ENCODE measurements at regions of chr3 and their contacts with region 1.

Region 1: GRCh38 chr3:45593708-45594609 is 592 bp upstream of the LIMD1 start:
- DNase-seq: peak; percentile 77 to 87
- ATAC-seq: peak; percentile 64 to 74 (median 70)
- H3K4me3 ChIP-seq: peak overlapping the region; percentile 92
- H3K27ac ChIP-seq: peak overlapping the region; percentile 98
- H3K4me1 ChIP-seq: peaks cover 41% of the 10 kb centered on the region
- H3K27me3 ChIP-seq: no peaks in the 10 kb centered on the region
- CTCF ChIP-seq: no peak

Region 2: GRCh38 chr3:45507820-45508317 is 86.1 kb before region 1 on chr3:
- intact Hi-C with region 1: loop called (anchors 2 to 5 kb)
- DNase-seq: peak; percentile 35 to 73
- ATAC-seq: peak in 3 of 4 donors; percentile 43 to 54 (median 46)
- H3K4me3 ChIP-seq: no peak overlapping the region
- H3K27ac ChIP-seq: no peak overlapping the region
- H3K4me1 ChIP-seq: no peaks in the 10 kb centered on the region
- H3K27me3 ChIP-seq: no peaks in the 10 kb centered on the region
- CTCF ChIP-seq: no peak

Region 3: DNA sequence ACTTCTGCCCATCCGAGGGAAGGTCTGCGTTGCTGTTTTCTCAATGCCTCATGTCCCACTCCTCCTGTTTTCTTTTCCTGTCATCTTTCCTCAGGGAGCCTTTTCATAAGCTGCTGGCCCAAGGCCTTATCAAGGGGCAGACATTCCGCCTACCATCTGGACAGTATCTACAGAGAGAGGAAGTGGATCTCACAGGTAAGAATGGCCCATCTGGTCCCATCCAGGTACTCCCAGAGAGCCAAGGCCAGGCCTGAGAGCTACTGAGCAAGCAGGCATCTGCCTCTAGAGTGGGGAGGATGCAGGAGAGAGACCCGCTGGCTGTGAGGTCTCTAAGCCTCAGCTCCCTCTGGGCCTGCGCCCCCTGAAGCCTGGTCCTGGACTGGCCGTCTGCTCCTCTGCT is 80.9 kb before region 1 on chr3:
- intact Hi-C with region 1: loop called (anchors 2 to 5 kb)
- DNase-seq: no peak
- ATAC-seq: no peak
- H3K4me3 ChIP-seq: no peak overlapping the region
- H3K27ac ChIP-seq: no peak overlapping the region
- H3K4me1 ChIP-seq: peaks cover 13% of the 10 kb centered on the region
- H3K27me3 ChIP-seq: no peaks in the 10 kb centered on the region
- CTCF ChIP-seq: no peak

Region 4: GRCh38 chr3:45546716-45547701 is 47.0 kb before region 1 on chr3:
- intact Hi-C with region 1: loop called in 1 of 2 experiments (anchors 5 kb)
- DNase-seq: peak in 1 of 2 donors; percentile 45
- ATAC-seq: peak in 1 of 4 donors; percentile 25
- H3K4me3 ChIP-seq: no peak overlapping the region
- H3K27ac ChIP-seq: peak overlapping the region; percentile 63
- H3K4me1 ChIP-seq: peaks cover 67% of the 10 kb centered on the region
- H3K27me3 ChIP-seq: no peaks in the 10 kb centered on the region
- CTCF ChIP-seq: peak; percentile 24

Region 5: DNA sequence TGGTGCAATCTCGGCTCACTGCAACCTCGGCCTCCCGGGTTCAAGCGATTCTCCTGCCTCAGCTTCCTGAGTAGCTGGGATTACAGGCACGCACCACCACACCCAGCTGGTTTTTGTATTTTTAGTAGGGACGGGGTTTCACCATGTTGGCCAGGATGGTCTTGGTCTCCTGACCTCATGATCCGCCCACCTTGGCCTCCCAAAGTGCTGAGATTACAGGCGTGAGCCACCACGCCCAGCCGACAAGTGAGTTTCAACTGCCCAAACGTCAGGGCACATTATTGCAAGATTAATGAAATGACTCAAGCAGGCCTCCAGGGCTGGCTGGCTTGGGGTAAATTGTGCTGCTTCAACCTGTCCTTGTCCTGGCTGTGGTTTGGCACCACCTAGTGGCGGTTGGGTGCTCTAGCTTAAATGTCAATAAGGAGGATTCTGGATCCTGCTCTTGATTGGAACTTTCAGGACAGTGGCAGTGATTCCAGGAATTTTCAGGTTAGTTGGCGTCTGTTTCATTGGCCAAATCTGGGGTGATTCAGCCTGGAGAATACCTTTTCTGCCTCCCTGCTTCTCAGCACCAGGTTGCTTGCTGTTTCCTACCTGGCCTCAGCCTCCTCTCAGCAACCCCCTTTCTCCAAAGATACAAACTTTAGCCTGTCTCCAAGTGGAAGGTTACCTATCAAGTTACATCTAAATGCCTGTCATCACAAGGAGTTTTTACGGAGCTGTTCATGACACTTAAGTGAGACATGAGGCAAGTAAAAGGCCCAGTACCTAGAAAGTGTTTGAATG is 62.8 kb after region 1 on chr3:
- intact Hi-C with region 1: loop called (anchors 2 kb)
- DNase-seq: peak; percentile 93
- ATAC-seq: peak; percentile 86 to 90 (median 88)
- H3K4me3 ChIP-seq: no peak overlapping the region
- H3K27ac ChIP-seq: peak overlapping the region; percentile 66
- H3K4me1 ChIP-seq: peaks cover 59% of the 10 kb centered on the region
- H3K27me3 ChIP-seq: no peaks in the 10 kb centered on the region
- CTCF ChIP-seq: peak; percentile 95